Head of caudate nucleus (tissue), 42 donors: ENCODE measurements at regions of chr6 and their contacts with region 1.

Region 1: GRCh38 chr6:24774696-24775519 is at the start of gene GMNN:
- DNase-seq: peak; percentile 96 to 100 (median 99)

Region 2: GRCh38 chr6:24581084-24581669 is 193.7 kb before region 1 on chr6:
- intact Hi-C with region 1: loop called (anchors 10 kb)
- DNase-seq: peak; percentile 58 to 92 (median 80)

Region 3: GRCh38 chr6:24720604-24721460 is 54.1 kb before region 1 on chr6:
- intact Hi-C with region 1: loop called (anchors 2 kb)
- DNase-seq: peak; percentile 97 to 100 (median 100)